GM12878 (cell line): ENCODE measurements at regions of chr13 and their contacts with region 1.

Region 1: GRCh38 chr13:102845630-102846260 is at the start of gene ERCC5:
- DNase-seq: peak; percentile 90
- ATAC-seq: peak; percentile 93
- H3K4me3 ChIP-seq: peak within 1 kb of the TSS; percentile 98
- H3K27ac ChIP-seq: peak within 1 kb of the TSS; percentile 96
- H3K4me1 ChIP-seq: peaks cover 3% of the 10 kb centered on the region; the same call in 1 of the 2 replicates
- H3K27me3 ChIP-seq: no peaks in the 10 kb centered on the region
- CTCF ChIP-seq: peak in 1 of 3 experiments; percentile 4; a peak in 2 of 6 replicates
- EP300 ChIP-seq: 0 out of 4 replicates have a peak, but pooled peaks of 1 of the 2 experiments have one; percentile 24
- POLR2A ChIP-seq: peak; percentile 89
- RAD21 ChIP-seq: no peak; the same call in 1 of the 2 replicates
- polyA plus RNA-seq, gene ERCC5: 11.7 to 24.3 TPM

Region 2: GRCh38 chr13:102580552-102581169 is 265.1 kb before region 1 on chr13:
- CTCF ChIA-PET with region 1: interaction called, 17 read pairs
- POLR2A ChIA-PET with region 1: interaction called, 3 read pairs
- RAD21 ChIA-PET with region 1: interaction called, 3 read pairs
- SMC1A ChIA-PET with region 1: interaction called, 8 read pairs
- in situ Hi-C with region 1: no loop called
- intact Hi-C with region 1: loop called (anchors 1 kb)
- DNase-seq: no peak
- ATAC-seq: peak; percentile 89
- H3K4me3 ChIP-seq: no peak overlapping the region
- H3K27ac ChIP-seq: no peak overlapping the region
- H3K4me1 ChIP-seq: peaks cover 6% of the 10 kb centered on the region
- H3K27me3 ChIP-seq: no peaks in the 10 kb centered on the region
- CTCF ChIP-seq: peak; percentile 68 to 79 (median 71)
- EP300 ChIP-seq: no peak
- POLR2A ChIP-seq: no peak
- RAD21 ChIP-seq: peak; percentile 90

Region 3: DNA sequence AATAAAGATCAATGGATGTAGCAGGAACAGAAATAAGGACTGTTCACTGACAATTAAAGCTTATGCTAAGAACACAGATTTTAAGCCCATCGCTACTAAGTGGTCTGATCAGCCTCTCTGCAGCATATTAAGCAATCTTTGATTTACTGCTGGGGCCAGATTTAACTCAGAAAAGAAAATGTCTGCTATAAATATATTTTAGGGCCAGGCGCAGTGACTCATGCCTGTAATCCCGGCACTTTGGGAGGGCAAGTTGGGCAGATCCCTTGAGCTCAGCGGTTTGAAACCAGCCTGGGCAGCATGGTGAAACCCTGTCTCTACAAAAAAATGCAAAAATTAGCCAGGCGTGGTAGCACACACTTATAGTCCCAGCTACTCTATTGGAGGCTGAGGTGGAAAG is 193.9 kb before region 1 on chr13:
- CTCF ChIA-PET with region 1: no interaction called
- POLR2A ChIA-PET with region 1: no interaction called
- RAD21 ChIA-PET with region 1: no interaction called
- SMC1A ChIA-PET with region 1: interaction called, 3 read pairs
- in situ Hi-C with region 1: no loop called
- intact Hi-C with region 1: loop called (anchors 5 kb)
- DNase-seq: no peak
- ATAC-seq: no peak
- H3K4me3 ChIP-seq: no peak overlapping the region
- H3K27ac ChIP-seq: no peak overlapping the region
- H3K4me1 ChIP-seq: no peaks in the 10 kb centered on the region
- H3K27me3 ChIP-seq: no peaks in the 10 kb centered on the region
- CTCF ChIP-seq: no peak
- EP300 ChIP-seq: no peak
- POLR2A ChIP-seq: no peak
- RAD21 ChIP-seq: no peak

Region 4: DNA sequence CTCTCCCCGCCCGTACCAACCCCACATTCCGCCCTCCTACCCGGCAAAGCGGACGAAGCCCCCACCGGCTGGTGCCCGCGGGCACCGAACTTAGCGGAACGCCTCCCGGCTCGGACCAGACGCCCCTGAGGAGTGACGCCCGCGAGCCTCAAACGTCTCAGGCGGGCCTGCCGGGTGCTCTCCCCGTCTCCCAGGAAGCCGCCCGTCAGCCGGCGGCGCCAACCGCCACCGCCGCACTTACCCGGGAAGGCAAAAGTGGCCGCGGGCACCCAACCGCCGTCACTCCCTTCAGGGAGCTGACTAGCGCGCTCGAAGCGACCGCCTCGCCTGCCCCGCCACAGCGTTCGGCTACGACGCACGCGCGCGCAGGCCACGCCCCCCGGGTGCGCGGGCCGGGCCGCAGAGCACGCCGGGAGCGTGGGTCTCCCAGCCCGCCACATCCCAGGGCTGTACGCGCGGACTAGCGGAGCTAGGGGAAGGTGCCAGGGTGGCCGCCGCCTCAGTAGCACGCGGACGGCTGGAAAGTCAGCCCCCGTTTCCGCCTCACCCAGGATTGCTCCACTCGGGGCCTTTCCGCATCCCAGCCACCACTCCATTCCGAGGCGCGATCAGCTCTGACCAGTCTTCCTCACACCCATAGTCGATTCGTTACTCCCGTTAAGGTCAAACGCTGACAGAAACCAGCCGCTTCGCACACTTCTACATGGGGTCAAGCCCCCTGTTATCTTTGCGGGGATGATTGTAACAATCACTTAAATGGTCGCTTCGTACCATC is 72.1 kb before region 1 on chr13 and contains the start of gene TEX30:
- CTCF ChIA-PET with region 1: interaction called, 6 read pairs
- POLR2A ChIA-PET with region 1: interaction called, 3 read pairs
- RAD21 ChIA-PET with region 1: interaction called, 7 read pairs
- SMC1A ChIA-PET with region 1: no interaction called
- in situ Hi-C with region 1: no loop called
- intact Hi-C with region 1: loop called (anchors 1 kb)
- DNase-seq: peak; percentile 38
- ATAC-seq: peak; percentile 95
- H3K4me3 ChIP-seq: peak within 1 kb of the TSS; percentile 89
- H3K27ac ChIP-seq: peak within 1 kb of the TSS; percentile 73
- H3K4me1 ChIP-seq: peaks cover 11% of the 10 kb centered on the region
- H3K27me3 ChIP-seq: no peaks in the 10 kb centered on the region
- CTCF ChIP-seq: no peak
- EP300 ChIP-seq: no peak
- POLR2A ChIP-seq: peak; percentile 99
- RAD21 ChIP-seq: no peak
- polyA plus RNA-seq, gene TEX30: 79.5 to 114 TPM

Region 5: GRCh38 chr13:102800145-102801041 is 45.4 kb before region 1 on chr13:
- CTCF ChIA-PET with region 1: interaction called, 19 read pairs
- POLR2A ChIA-PET with region 1: interaction called, 11 read pairs
- RAD21 ChIA-PET with region 1: interaction called, 5 read pairs
- SMC1A ChIA-PET with region 1: interaction called, 5 read pairs
- in situ Hi-C with region 1: no loop called
- intact Hi-C with region 1: loop called (anchors 1 kb)
- DNase-seq: no peak
- ATAC-seq: peak; percentile 87
- H3K4me3 ChIP-seq: peak overlapping the region; percentile 77
- H3K27ac ChIP-seq: peak overlapping the region; percentile 72
- H3K4me1 ChIP-seq: peaks cover 5% of the 10 kb centered on the region; the same call in 1 of the 2 replicates
- H3K27me3 ChIP-seq: no peaks in the 10 kb centered on the region
- CTCF ChIP-seq: peak; percentile 76 to 91 (median 83)
- EP300 ChIP-seq: no peak
- POLR2A ChIP-seq: peak; percentile 85
- RAD21 ChIP-seq: peak; percentile 61

Region 6: DNA sequence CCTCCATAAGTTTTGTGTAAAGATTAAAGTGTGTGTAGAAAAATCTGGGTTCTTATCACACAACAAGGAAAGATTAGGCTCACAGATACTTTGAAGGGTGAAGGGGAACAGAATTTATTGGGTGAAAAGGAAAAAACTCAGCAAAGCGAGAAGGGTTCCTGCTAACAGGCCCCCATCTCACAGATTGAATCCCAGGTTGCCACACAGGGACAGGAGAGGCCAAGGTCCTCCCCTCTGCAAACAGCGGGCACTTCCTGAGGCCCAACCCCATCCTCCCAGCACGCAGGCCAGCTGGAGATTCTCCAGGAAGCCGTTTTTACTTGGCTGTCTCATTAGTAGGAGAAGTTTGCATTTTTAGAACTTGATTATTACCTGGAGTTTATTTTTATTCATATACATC is 15.1 kb before region 1 on chr13:
- CTCF ChIA-PET with region 1: interaction called, 3 read pairs
- POLR2A ChIA-PET with region 1: no interaction called
- RAD21 ChIA-PET with region 1: no interaction called
- SMC1A ChIA-PET with region 1: interaction called, 11 read pairs
- in situ Hi-C with region 1: no loop called
- intact Hi-C with region 1: no loop called
- DNase-seq: no peak
- ATAC-seq: no peak
- H3K4me3 ChIP-seq: no peak overlapping the region
- H3K27ac ChIP-seq: no peak overlapping the region
- H3K4me1 ChIP-seq: no peaks in the 10 kb centered on the region
- H3K27me3 ChIP-seq: no peaks in the 10 kb centered on the region
- CTCF ChIP-seq: no peak
- EP300 ChIP-seq: no peak
- POLR2A ChIP-seq: no peak
- RAD21 ChIP-seq: no peak

Region 7: GRCh38 chr13:102870677-102871415 is 25.1 kb after region 1 on chr13:
- CTCF ChIA-PET with region 1: interaction called, 22 read pairs
- POLR2A ChIA-PET with region 1: no interaction called
- RAD21 ChIA-PET with region 1: interaction called, 9 read pairs
- SMC1A ChIA-PET with region 1: interaction called, 4 read pairs
- in situ Hi-C with region 1: no loop called
- intact Hi-C with region 1: no loop called
- DNase-seq: no peak
- ATAC-seq: peak; percentile 95
- H3K4me3 ChIP-seq: no peak overlapping the region
- H3K27ac ChIP-seq: no peak overlapping the region
- H3K4me1 ChIP-seq: no peaks in the 10 kb centered on the region
- H3K27me3 ChIP-seq: no peaks in the 10 kb centered on the region
- CTCF ChIP-seq: peak; percentile 72 to 82 (median 73)
- EP300 ChIP-seq: no peak
- POLR2A ChIP-seq: no peak
- RAD21 ChIP-seq: peak; percentile 90

Region 8: GRCh38 chr13:102897371-102898138 is 51.8 kb after region 1 on chr13:
- CTCF ChIA-PET with region 1: no interaction called
- POLR2A ChIA-PET with region 1: no interaction called
- RAD21 ChIA-PET with region 1: no interaction called
- SMC1A ChIA-PET with region 1: no interaction called
- in situ Hi-C with region 1: no loop called
- intact Hi-C with region 1: no loop called
- DNase-seq: no peak
- ATAC-seq: no peak; the same call in 2 of the 3 replicates
- H3K4me3 ChIP-seq: no peak overlapping the region
- H3K27ac ChIP-seq: no peak overlapping the region
- H3K4me1 ChIP-seq: no peaks in the 10 kb centered on the region
- H3K27me3 ChIP-seq: no peaks in the 10 kb centered on the region
- CTCF ChIP-seq: no peak
- EP300 ChIP-seq: no peak
- POLR2A ChIP-seq: no peak
- RAD21 ChIP-seq: no peak